ENCODE measurements at regions of chr7 and their contacts with region 1.

Region 1: DNA sequence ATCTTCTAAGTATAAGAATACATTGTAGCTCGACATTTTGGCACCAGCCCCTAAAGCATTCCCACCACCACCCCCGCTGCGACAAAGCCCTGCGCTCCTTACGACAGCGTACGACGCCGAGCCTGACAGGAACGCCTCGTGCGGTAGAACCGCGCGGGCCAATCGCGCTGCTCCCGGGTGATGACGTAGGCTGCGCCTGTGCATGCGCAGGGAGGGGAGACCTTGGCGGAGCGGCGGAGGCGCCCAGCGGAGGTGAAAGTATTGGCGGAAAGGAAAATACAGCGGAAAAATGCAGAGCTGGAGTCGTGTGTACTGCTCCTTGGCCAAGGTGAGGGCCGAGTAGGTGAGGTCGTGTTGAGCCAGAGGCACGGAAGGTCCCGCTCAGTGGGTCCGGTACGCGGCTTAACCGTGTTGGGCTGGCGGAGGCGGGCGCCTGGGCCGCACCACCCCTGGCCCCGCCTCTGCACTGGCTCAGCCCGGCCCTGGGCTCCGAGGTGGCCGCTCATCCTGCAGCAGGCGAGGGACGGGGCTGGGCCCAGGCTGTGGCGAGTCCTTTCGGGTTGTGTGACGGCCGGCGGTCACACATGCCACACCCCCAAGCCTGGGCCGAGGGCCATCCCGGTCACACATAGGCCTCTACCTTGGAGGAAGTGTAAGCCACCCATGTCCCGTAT is at the start of gene DLD:
- DNase-seq: peak; percentile 98
- total RNA-seq, gene DLD: 299 TPM

Region 2: DNA sequence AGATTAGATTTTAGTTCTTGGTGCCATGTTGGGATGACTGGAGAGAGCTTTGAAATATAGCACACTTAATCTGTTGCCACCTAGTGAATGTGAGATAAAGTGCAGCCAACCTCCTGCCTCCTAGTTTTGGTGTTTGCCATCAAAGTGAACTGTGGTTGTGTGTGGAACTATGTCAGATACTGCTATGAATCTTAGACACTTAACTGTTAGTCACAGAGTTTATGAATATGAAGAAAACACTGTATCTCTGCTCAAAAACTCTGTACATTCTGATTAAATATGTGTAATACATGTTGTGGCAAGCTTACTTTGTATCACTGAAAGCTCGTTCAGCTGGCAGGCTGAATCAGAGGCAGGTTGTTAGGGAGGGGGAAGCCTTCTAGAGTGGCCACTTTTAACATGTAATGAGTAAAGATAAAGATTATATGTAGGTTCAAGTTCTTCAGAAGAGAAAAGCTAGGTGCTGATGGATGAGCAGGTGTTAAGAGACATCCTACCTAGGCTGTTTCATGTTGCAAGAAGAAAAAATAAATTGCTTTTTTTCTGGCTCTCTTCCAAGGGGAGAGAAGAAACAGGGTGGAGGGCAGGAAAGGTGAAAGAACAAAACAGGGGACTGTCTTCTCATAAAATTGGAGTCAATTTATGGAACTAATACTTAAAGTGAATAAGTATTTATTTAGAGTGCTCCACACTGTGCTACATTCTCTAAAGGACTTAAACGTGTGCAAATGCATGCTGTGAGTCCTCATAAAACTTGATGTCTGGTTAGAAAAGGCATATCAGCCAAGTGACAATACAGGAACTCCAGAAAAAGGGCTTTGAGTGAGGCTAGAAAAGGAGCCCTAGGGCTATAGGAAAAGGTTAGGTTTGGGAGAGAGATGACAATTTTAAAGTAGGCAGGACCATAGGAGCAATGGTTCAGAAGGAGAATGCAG is 126.0 kb after region 1 on chr7:
- intact Hi-C with region 1: loop called (anchors 5 kb)
- DNase-seq: no peak

Measured in cardiac septum (tissue), 1 donor.